ENCODE measurements at regions of chr12 and their contacts with region 1.

Region 1: GRCh38 chr12:69239352-69239921 is at the start of gene CPSF6:
- DNase-seq: peak; percentile 99
- H3K4me3 Mint-ChIP-seq: peak within 1 kb of the TSS; percentile 97
- H3K27ac Mint-ChIP-seq: peak within 1 kb of the TSS; percentile 98
- H3K4me1 Mint-ChIP-seq: peaks cover 43% of the 10 kb centered on the region
- H3K27me3 Mint-ChIP-seq: no peaks in the 10 kb centered on the region
- total RNA-seq, gene CPSF6: 114 and 121 TPM in 2 replicates

Region 2: GRCh38 chr12:67268896-67269631 is 1970.4 kb before region 1 on chr12 and contains the start of gene CAND1:
- intact Hi-C with region 1: loop called (anchors 1 kb)
- DNase-seq: peak; percentile 99
- H3K4me3 Mint-ChIP-seq: peak within 1 kb of the TSS; percentile 90
- H3K27ac Mint-ChIP-seq: peak within 1 kb of the TSS; percentile 100
- H3K4me1 Mint-ChIP-seq: peaks cover 30% of the 10 kb centered on the region
- H3K27me3 Mint-ChIP-seq: no peaks in the 10 kb centered on the region
- total RNA-seq, gene CAND1: 202 and 216 TPM in 2 replicates

Region 3: DNA sequence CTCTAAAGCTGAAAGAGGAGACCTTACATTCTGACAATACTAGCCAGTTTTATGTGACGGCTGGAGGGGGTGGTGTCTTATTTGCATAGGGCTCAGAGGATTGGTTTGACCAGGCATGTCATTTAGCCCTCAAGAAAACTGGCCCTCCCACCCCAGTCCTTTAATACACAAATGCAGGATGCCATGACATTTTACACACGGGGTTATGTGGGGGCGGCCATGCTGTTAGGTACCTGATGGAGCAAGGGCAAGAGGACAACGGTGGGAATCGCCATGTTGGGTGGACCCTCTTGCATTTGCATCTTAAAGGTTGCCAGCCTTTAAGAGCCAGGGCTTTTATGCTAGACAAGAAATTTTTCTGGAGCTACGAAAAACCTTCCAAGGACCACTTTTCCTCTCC is 408.2 kb before region 1 on chr12:
- intact Hi-C with region 1: loop called (anchors 10 kb)
- DNase-seq: peak; percentile 52
- H3K4me3 Mint-ChIP-seq: no peak overlapping the region
- H3K27ac Mint-ChIP-seq: no peak overlapping the region
- H3K4me1 Mint-ChIP-seq: peaks cover 19% of the 10 kb centered on the region
- H3K27me3 Mint-ChIP-seq: no peaks in the 10 kb centered on the region

Region 4: DNA sequence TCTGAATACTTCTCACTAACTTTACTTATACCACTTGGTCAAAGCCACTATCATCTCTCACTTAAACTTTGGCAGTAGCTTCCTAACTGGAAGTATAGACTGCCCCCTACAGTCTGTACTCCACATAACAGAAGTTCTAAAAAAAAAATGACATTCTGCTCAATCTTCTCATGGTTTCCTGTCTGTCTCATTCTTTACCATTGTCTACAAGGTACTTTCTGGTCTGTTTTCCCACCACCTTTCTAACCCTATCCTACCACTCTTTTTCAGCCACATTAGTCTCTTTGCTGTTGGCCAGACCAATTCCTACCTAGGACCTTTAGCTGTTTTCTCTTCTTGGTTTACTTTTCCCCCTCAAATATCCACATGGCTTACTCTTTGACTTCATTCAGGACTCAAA is 14.6 kb after region 1 on chr12:
- intact Hi-C with region 1: loop called (anchors 2 kb)
- DNase-seq: peak; percentile 77
- H3K4me3 Mint-ChIP-seq: no peak overlapping the region
- H3K27ac Mint-ChIP-seq: peak overlapping the region; percentile 43
- H3K4me1 Mint-ChIP-seq: peaks cover 27% of the 10 kb centered on the region
- H3K27me3 Mint-ChIP-seq: no peaks in the 10 kb centered on the region

Region 5: DNA sequence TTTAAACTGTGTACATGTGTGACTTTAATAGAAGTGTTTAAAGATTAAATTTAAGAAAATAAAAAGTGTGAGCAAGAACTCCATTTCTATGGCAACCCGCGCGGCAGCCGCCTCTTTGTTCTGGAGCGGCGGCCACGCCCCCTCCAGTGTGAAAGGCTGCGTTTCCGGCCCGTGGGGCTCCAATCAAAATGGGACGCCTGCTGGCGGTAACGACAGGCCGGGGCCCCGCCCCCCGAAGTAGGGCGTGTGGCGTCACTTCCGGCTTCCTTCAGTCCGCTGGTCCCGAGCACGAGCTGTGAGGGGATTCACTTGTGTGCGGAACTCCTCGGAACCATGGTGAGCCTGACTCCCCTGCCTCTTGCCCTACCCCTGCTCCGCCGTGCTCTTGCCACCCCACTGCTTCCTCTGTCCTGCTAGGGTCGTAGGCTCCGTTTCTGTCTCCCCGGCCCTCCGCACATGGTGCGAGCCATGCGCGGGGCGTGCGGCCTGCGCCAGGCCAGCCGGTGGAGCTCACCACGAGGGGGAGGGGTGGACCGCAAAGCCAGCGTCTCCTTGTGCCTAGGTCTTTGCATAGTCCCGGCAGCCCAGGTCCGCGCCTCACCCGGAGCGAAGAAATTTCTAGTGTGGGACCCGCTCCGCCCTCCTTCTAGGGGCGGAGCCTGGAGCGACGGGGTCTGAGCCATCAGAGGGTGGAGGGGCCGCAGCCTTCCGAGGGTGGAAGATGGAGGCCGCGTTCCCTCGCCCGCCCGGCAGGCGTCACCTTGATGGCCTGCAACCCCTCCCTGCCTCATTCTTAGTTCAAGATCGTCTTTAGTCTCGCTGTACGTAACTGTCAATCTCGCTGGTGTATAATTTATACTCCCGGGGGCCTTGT is 346.0 kb after region 1 on chr12 and contains the start of gene CCT2:
- intact Hi-C with region 1: loop called (anchors 5 kb)
- DNase-seq: peak; percentile 99
- H3K4me3 Mint-ChIP-seq: peak within 1 kb of the TSS; percentile 99
- H3K27ac Mint-ChIP-seq: peak within 1 kb of the TSS; percentile 99
- H3K4me1 Mint-ChIP-seq: peaks cover 14% of the 10 kb centered on the region
- H3K27me3 Mint-ChIP-seq: no peaks in the 10 kb centered on the region
- total RNA-seq, gene CCT2: 490 and 511 TPM in 2 replicates

Region 6: GRCh38 chr12:69738351-69739286 is 499.2 kb after region 1 on chr12 and contains the start of gene RAB3IP:
- intact Hi-C with region 1: loop called (anchors 5 kb)
- DNase-seq: peak; percentile 97
- H3K4me3 Mint-ChIP-seq: peak within 1 kb of the TSS; percentile 86
- H3K27ac Mint-ChIP-seq: peak within 1 kb of the TSS; percentile 76
- H3K4me1 Mint-ChIP-seq: peaks cover 15% of the 10 kb centered on the region
- H3K27me3 Mint-ChIP-seq: peaks cover 33% of the 10 kb centered on the region
- total RNA-seq, gene RAB3IP: 28.5 and 33.6 TPM in 2 replicates

Measured in activated CD4-positive, alpha-beta T cell treated with anti-CD3 and anti-CD28 coated beads, Interleukin-2, amount 10 ng/mL, durations not matched to agents 24 days and 14 days (primary cell).